Activated T-helper 1 cell treated with anti-CD3 and anti-CD28 coated beads, Interleukin-12 subunit alpha, Interleukin-12 subunit beta, Interleukin-2, Interleukin-4 antibody, amounts not matched to agents 30 ng/mL and 10 ng/mL and 1 ng/mL, durations not matched to agents 14 hours and 24 hours and 36 hours (primary cell): ENCODE measurements at regions of chr1 and their contacts with region 1.

Region 1: GRCh38 chr1:97803026-97803425 is 117.8 kb downstream of the DPYD start:
- DNase-seq: no peak
- H3K4me3 Mint-ChIP-seq: no peak overlapping the region
- H3K27ac Mint-ChIP-seq: no peak overlapping the region
- H3K4me1 Mint-ChIP-seq: no peaks in the 10 kb centered on the region
- H3K27me3 Mint-ChIP-seq: no peaks in the 10 kb centered on the region

Region 2: GRCh38 chr1:97849345-97850340 is 46.6 kb after region 1 on chr1:
- intact Hi-C with region 1: loop called (anchors 1 kb)
- DNase-seq: no peak
- H3K4me3 Mint-ChIP-seq: no peak overlapping the region
- H3K27ac Mint-ChIP-seq: no peak overlapping the region
- H3K4me1 Mint-ChIP-seq: peaks cover 11% of the 10 kb centered on the region
- H3K27me3 Mint-ChIP-seq: no peaks in the 10 kb centered on the region